ENCODE measurements at regions of chr6 and their contacts with region 1.

Region 1: DNA sequence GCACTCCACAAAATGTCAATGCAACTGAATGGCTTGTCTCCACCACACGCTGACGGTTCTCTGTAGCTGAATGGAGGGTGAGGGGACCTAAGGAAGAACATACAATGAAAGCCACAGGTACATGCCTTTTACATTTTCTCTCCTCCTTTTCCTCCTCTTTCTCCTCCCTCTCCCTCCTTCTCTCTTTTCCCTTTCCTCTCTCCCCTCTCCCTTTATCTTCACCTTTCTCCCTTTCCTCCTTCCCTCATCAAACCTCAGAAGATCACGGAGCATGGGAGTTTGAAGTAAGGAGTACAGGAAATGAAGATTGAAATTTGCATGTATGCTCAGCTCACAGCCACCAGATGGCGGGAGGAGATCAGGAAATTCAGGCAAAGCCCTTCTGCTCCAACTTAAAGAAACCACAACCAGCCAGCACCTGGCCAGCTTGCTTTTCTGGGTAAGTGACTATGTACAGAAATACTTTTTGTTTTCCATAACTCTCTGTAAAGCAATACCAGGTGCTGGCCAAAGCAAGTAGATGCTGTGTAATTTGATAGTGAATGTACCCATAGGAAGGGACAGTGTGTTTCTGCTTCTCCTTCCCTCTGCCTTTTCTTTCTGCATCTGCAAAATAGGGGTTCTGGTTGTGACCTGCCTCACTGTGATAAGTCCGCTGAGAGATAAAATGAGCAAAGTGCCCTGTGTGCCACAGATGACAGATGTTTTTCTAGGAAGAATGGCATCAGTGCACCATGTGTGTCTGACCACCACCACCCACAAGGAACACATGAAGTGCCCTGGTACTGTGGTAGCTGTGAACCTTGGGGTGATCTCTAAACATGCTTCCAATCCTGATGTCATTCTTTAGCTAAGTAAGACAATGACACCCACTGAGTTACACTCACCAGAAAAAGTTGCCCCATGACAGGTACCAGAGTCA is 18.6 kb upstream of the FOXO3 start:
- DNase-seq: peak; percentile 72 to 73
- H3K4me3 ChIP-seq: no peak overlapping the region
- H3K27ac ChIP-seq: no peak overlapping the region
- H3K4me1 ChIP-seq: no peaks in the 10 kb centered on the region
- H3K27me3 ChIP-seq: no peaks in the 10 kb centered on the region
- CTCF ChIP-seq: peak; percentile 95 to 97 (median 95)
- POLR2A ChIP-seq: no peak

Region 2: DNA sequence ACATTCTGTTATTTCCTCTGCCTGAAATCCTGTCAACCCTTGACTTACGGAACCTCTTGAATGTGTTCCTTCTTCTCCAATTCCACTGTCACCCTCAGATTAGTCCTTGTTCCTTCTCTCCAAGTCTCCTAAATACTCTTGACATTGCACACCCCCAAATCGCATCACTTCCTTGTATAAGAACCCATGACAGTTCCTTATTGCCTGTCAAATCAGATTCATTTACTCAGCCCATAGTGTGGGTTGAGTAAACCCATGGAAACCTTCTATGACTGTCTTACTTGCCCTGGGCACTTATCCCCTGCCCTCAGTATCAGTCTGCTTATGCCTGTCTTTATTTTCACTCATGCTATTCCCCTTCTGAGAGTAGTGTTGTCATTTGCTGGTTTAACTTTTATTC is 346.6 kb after region 1 on chr6:
- intact Hi-C with region 1: loop called (anchors 5 kb)
- DNase-seq: no peak
- H3K4me3 ChIP-seq: no peak overlapping the region
- H3K27ac ChIP-seq: no peak overlapping the region
- H3K4me1 ChIP-seq: no peaks in the 10 kb centered on the region
- H3K27me3 ChIP-seq: no peaks in the 10 kb centered on the region
- CTCF ChIP-seq: no peak
- POLR2A ChIP-seq: no peak

Region 3: GRCh38 chr6:109082188-109082577 is 540.1 kb after region 1 on chr6:
- intact Hi-C with region 1: loop called (anchors 5 kb)
- DNase-seq: no peak
- H3K4me3 ChIP-seq: no peak overlapping the region
- H3K27ac ChIP-seq: no peak overlapping the region
- H3K4me1 ChIP-seq: no peaks in the 10 kb centered on the region
- H3K27me3 ChIP-seq: no peaks in the 10 kb centered on the region
- CTCF ChIP-seq: no peak
- POLR2A ChIP-seq: no peak

Measured in breast epithelium (tissue), 4 donors.